ENCODE measurements at regions of chr13 and their contacts with region 1.

Region 1: GRCh38 chr13:20960663-20961309 is 58.2 kb upstream of the XPO4 start:
- DNase-seq: no peak
- H3K4me3 ChIP-seq: no peak overlapping the region
- H3K27ac ChIP-seq: no peak overlapping the region
- H3K4me1 ChIP-seq: no peaks in the 10 kb centered on the region
- H3K27me3 ChIP-seq: no peaks in the 10 kb centered on the region
- CTCF ChIP-seq: no peak

Region 2: GRCh38 chr13:20118268-20119140 is 842.3 kb before region 1 on chr13:
- CTCF ChIA-PET with region 1: interaction called, 10 read pairs
- dilution Hi-C with region 1: no loop called
- in situ Hi-C with region 1: no loop called
- intact Hi-C with region 1: no loop called
- DNase-seq: no peak
- H3K4me3 ChIP-seq: peak overlapping the region; percentile 29 to 48 (median 44)
- H3K27ac ChIP-seq: no peak overlapping the region
- H3K4me1 ChIP-seq: peaks cover 6% of the 10 kb centered on the region
- H3K27me3 ChIP-seq: no peaks in the 10 kb centered on the region
- CTCF ChIP-seq: no peak

Region 3: GRCh38 chr13:20287976-20288375 is 672.8 kb before region 1 on chr13:
- CTCF ChIA-PET with region 1: no interaction called
- dilution Hi-C with region 1: no loop called
- in situ Hi-C with region 1: no loop called
- intact Hi-C with region 1: no loop called
- DNase-seq: no peak
- H3K4me3 ChIP-seq: no peak overlapping the region
- H3K27ac ChIP-seq: no peak overlapping the region
- H3K4me1 ChIP-seq: no peaks in the 10 kb centered on the region
- H3K27me3 ChIP-seq: no peaks in the 10 kb centered on the region
- CTCF ChIP-seq: no peak

Region 4: GRCh38 chr13:20684546-20684945 is 276.2 kb before region 1 on chr13:
- CTCF ChIA-PET with region 1: no interaction called
- dilution Hi-C with region 1: no loop called
- in situ Hi-C with region 1: no loop called
- intact Hi-C with region 1: no loop called
- DNase-seq: no peak
- H3K4me3 ChIP-seq: no peak overlapping the region
- H3K27ac ChIP-seq: no peak overlapping the region
- H3K4me1 ChIP-seq: no peaks in the 10 kb centered on the region
- H3K27me3 ChIP-seq: no peaks in the 10 kb centered on the region
- CTCF ChIP-seq: no peak

Measured in mammary epithelial cell (primary cell).